Activated CD4-positive, alpha-beta T cell treated with anti-CD3 and anti-CD28 coated beads for 36 hours (primary cell): ENCODE measurements at regions of chr6 and their contacts with region 1.

Region 1: GRCh38 chr6:161128680-161129196 is 137.2 kb downstream of the MAP3K4 start:
- DNase-seq: peak; percentile 76
- ATAC-seq: peak; percentile 77
- H3K4me3 Mint-ChIP-seq: peak overlapping the region; percentile 50
- H3K27ac Mint-ChIP-seq: peak overlapping the region; percentile 89
- H3K4me1 Mint-ChIP-seq: peaks cover 34% of the 10 kb centered on the region
- H3K27me3 Mint-ChIP-seq: no peaks in the 10 kb centered on the region

Region 2: GRCh38 chr6:161215193-161215592 is 86.5 kb after region 1 on chr6:
- CTCF ChIA-PET with region 1: no interaction called
- POLR2A ChIA-PET with region 1: no interaction called
- intact Hi-C with region 1: no loop called
- DNase-seq: no peak
- ATAC-seq: no peak
- H3K4me3 Mint-ChIP-seq: no peak overlapping the region
- H3K27ac Mint-ChIP-seq: no peak overlapping the region
- H3K4me1 Mint-ChIP-seq: no peaks in the 10 kb centered on the region
- H3K27me3 Mint-ChIP-seq: no peaks in the 10 kb centered on the region

Region 3: GRCh38 chr6:161235776-161236633 is 107.3 kb after region 1 on chr6:
- CTCF ChIA-PET with region 1: no interaction called
- POLR2A ChIA-PET with region 1: no interaction called
- intact Hi-C with region 1: loop called in 1 of 2 experiments (anchors 2 kb)
- DNase-seq: peak; percentile 19
- ATAC-seq: peak; percentile 87
- H3K4me3 Mint-ChIP-seq: no peak overlapping the region
- H3K27ac Mint-ChIP-seq: peak overlapping the region; percentile 81
- H3K4me1 Mint-ChIP-seq: peaks cover 25% of the 10 kb centered on the region
- H3K27me3 Mint-ChIP-seq: no peaks in the 10 kb centered on the region

Region 4: GRCh38 chr6:161379834-161380598 is 251.3 kb after region 1 on chr6:
- CTCF ChIA-PET with region 1: no interaction called
- POLR2A ChIA-PET with region 1: no interaction called
- intact Hi-C with region 1: no loop called
- DNase-seq: no peak
- ATAC-seq: no peak
- H3K4me3 Mint-ChIP-seq: no peak overlapping the region
- H3K27ac Mint-ChIP-seq: no peak overlapping the region
- H3K4me1 Mint-ChIP-seq: no peaks in the 10 kb centered on the region
- H3K27me3 Mint-ChIP-seq: no peaks in the 10 kb centered on the region